ENCODE measurements at regions of chr10 and their contacts with region 1.

Region 1: DNA sequence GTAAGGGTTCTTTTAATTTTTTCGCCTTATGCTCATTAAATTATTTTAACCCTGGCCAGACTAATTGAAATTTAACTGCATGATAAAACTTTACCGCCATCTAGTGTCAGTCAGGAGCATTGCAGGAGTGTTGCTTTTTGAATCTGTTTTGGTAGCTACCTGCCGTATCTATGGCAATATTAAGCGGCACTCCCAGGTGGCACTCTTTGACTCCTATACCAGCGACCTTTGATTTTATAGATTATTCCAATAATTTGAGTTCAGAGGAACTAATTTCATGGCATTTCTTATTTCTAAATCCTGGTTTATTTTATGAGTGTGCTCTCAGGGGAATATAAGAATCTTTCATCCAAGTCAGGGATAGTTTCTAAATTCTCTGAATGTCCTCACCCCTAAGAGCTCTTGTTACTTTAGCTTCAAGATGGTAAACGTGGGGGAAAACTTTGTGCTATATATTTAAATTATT is 198.9 kb downstream of the REEP3 start:
- DNase-seq: peak; percentile 52
- H3K4me3 ChIP-seq: no peak overlapping the region
- H3K27ac ChIP-seq: peak overlapping the region; percentile 36
- H3K4me1 ChIP-seq: peaks cover 22% of the 10 kb centered on the region
- H3K27me3 ChIP-seq: no peaks in the 10 kb centered on the region
- CTCF ChIP-seq: peak; percentile 93 to 98

Region 2: DNA sequence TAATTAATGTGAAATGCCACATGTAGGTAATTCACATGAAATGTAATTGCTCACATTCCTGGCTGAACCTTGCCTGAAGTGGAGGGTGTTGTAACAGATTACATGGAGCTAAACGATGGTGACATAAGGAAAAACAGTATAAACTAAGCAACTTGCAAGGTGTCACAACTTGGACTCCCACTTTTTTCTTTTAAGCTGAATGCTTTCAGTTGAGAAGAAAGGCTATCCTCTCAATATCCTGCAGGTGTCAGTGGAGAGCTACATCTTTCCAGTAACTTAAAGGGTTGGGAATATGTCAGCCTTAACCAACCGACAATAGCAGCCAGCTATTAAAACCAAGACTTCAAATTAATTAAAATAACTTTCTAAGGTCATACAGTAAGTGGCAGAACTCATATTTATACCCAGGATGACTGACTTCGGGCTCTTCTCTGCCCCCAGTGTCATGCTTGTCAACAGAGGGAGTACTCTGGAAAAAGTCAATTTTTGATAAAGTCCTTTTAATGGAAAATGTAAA is 553.3 kb before region 1 on chr10:
- CTCF ChIA-PET with region 1: interaction called, 5 read pairs
- dilution Hi-C with region 1: loop called (anchors 5 kb)
- in situ Hi-C with region 1: loop called in 1 of 2 experiments (anchors 10 kb)
- intact Hi-C with region 1: loop called (anchors 1 kb)
- DNase-seq: peak; percentile 59
- H3K4me3 ChIP-seq: no peak overlapping the region
- H3K27ac ChIP-seq: no peak overlapping the region
- H3K4me1 ChIP-seq: no peaks in the 10 kb centered on the region
- H3K27me3 ChIP-seq: no peaks in the 10 kb centered on the region
- CTCF ChIP-seq: peak; percentile 72 to 75

Region 3: GRCh38 chr10:63465293-63466143 is 254.6 kb before region 1 on chr10 and contains the start of gene JMJD1C:
- CTCF ChIA-PET with region 1: no interaction called
- dilution Hi-C with region 1: no loop called
- in situ Hi-C with region 1: no loop called
- intact Hi-C with region 1: loop called (anchors 2 kb)
- DNase-seq: peak; percentile 83
- H3K4me3 ChIP-seq: peak within 1 kb of the TSS; percentile 88 to 97 (median 92)
- H3K27ac ChIP-seq: peak within 1 kb of the TSS; percentile 88
- H3K4me1 ChIP-seq: peaks cover 4% of the 10 kb centered on the region
- H3K27me3 ChIP-seq: no peaks in the 10 kb centered on the region
- CTCF ChIP-seq: peak in 1 of 2 donors; percentile 1
- total RNA-seq, gene JMJD1C: 57.7 to 80.4 TPM

Region 4: DNA sequence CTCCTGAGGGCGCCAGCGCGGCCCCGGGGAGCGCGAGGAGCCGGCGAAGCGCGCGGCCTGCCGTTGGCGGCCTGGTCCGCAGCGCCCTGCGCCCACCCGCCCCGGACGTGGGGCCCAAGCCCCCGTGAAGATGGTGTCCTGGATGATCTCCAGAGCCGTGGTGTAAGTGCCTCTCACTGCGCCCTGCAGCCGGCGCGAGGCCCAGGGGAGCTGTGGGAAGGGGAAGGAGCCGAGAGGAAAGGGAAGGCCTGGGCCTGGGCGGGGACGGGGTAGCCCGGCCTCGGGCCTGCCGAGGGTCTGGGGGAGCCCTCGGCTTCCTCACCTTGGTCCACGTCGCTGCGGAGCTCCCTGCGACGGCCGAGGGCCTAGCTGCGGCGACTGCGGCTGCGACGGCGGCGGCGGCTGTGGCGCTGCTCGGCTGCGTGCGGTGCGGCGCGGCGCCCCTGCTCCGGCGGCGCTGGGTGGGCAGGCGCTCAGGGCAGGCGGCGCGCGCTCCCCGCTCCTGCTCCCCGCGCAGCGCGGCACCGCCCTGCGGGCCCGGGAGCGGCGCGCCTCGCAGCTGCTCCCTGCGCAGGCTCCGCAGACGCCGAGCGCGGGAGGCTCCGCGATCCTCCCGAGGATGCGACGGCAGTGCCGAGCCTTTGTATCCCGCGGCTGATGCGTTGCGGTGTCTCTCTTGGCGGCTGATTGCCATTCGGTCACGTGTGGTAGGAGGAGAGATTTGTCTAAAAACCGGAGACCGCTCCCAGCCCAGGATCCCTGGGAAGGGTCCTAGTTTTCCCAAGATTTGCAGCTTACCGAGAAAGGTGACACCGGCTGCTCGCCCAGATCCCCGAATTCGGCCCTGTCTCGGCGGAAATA is 198.5 kb before region 1 on chr10:
- CTCF ChIA-PET with region 1: no interaction called
- dilution Hi-C with region 1: no loop called
- in situ Hi-C with region 1: loop called in 1 of 2 experiments (anchors 25 kb)
- intact Hi-C with region 1: no loop called
- DNase-seq: peak; percentile 66
- H3K4me3 ChIP-seq: peak overlapping the region; percentile 91 to 95 (median 92)
- H3K27ac ChIP-seq: peak overlapping the region; percentile 90
- H3K4me1 ChIP-seq: peaks cover 27% of the 10 kb centered on the region
- H3K27me3 ChIP-seq: no peaks in the 10 kb centered on the region
- CTCF ChIP-seq: no peak

Region 5: DNA sequence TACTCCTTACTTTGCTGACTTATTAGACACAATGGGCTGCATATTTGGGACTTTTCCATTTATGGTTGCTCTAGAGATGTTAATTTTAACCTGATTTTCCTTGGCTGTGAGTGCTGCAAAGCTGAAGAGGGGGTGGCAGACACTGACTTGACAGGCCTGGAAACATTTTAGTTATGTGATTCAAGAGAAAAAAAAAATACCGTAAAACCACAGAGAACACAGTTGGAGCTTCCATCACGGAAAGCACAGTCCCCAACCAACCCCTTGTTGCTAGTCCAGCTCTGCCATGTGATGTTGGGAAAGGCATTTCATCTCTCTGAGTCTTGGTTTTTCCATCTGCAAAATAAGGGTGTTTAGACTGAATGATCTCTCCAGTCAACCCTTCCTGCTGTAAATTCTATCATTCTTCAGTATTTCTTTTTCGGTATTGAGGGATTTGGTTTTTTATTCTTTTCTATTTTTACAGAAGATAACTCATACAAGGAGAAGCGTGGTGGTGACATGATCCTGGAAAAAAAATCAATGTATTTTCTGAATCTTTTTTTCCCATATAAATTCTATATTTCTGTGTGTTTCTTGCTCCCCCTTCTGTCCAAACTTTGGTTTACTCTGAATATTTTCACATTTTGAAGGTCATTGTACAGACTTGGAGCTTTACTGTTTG is 47.2 kb after region 1 on chr10:
- CTCF ChIA-PET with region 1: interaction called, 4 read pairs
- dilution Hi-C with region 1: no loop called
- in situ Hi-C with region 1: no loop called
- intact Hi-C with region 1: loop called (anchors 1 kb)
- DNase-seq: peak; percentile 8
- H3K4me3 ChIP-seq: no peak overlapping the region
- H3K27ac ChIP-seq: no peak overlapping the region
- H3K4me1 ChIP-seq: peaks cover 28% of the 10 kb centered on the region
- H3K27me3 ChIP-seq: no peaks in the 10 kb centered on the region
- CTCF ChIP-seq: peak; percentile 27 to 39

Region 6: DNA sequence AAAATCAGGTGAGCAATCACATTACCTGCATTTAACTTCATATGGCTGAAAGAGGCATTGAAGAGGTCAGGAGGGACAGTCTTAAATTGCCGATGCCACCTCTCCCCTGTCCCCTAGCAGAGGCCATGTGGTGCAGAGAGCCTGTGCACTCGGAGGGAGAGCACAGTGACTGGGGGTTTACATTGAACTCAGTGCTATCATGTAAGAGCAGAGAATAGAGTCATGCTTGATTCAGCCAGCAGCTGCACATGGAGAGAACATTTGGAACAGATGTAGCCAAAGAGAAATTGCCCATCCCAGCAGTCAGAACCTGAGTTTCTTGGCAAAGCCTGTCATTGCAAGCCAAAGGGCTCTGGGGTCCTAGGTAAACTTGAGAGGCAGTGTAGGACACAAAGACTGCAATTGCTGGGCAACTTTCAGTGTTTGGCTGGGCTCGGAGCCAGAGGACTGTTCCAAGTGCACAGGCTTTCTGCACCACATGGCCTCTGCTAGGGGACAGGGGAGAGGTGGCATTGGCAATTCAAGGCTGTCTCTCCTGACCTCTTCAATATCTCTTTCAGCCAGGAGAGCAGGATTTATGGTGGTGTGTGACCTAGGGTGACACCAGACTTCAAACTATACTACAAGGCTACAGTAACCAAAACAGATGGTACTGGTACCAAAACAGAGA is 68.2 kb after region 1 on chr10:
- CTCF ChIA-PET with region 1: no interaction called
- dilution Hi-C with region 1: no loop called
- in situ Hi-C with region 1: no loop called
- intact Hi-C with region 1: no loop called
- DNase-seq: no peak
- H3K4me3 ChIP-seq: no peak overlapping the region
- H3K27ac ChIP-seq: no peak overlapping the region
- H3K4me1 ChIP-seq: no peaks in the 10 kb centered on the region
- H3K27me3 ChIP-seq: no peaks in the 10 kb centered on the region
- CTCF ChIP-seq: no peak

Region 7: DNA sequence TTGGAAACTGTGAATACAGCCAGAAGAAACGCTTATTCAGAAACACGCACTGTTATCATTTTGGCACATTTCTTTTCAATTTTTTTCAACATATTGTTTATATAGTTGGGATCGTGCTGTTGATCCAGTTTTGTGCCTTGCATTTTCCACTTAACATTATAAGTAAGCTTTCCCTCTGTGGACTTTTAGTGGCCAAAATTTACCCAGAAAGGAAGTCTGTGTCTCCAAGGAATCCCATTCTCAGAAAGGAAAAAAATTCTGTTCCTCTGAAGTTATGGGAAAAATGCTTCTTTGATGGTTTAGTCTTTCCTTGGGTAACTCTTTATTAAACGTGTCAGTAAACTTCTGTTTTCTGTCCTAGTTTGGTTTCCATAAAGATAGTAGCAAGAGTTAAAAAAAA is 81.1 kb after region 1 on chr10:
- CTCF ChIA-PET with region 1: no interaction called
- dilution Hi-C with region 1: no loop called
- in situ Hi-C with region 1: no loop called
- intact Hi-C with region 1: no loop called
- DNase-seq: no peak
- H3K4me3 ChIP-seq: no peak overlapping the region
- H3K27ac ChIP-seq: no peak overlapping the region
- H3K4me1 ChIP-seq: peaks cover 7% of the 10 kb centered on the region
- H3K27me3 ChIP-seq: no peaks in the 10 kb centered on the region
- CTCF ChIP-seq: no peak

Measured in mammary epithelial cell (primary cell).